Activated CD4-positive, alpha-beta T cell treated with anti-CD3 and anti-CD28 coated beads, Interleukin-2, amount 10 ng/mL, durations not matched to agents 24 days and 14 days (primary cell): ENCODE measurements at regions of chr2 and their contacts with region 1.

Region 1: DNA sequence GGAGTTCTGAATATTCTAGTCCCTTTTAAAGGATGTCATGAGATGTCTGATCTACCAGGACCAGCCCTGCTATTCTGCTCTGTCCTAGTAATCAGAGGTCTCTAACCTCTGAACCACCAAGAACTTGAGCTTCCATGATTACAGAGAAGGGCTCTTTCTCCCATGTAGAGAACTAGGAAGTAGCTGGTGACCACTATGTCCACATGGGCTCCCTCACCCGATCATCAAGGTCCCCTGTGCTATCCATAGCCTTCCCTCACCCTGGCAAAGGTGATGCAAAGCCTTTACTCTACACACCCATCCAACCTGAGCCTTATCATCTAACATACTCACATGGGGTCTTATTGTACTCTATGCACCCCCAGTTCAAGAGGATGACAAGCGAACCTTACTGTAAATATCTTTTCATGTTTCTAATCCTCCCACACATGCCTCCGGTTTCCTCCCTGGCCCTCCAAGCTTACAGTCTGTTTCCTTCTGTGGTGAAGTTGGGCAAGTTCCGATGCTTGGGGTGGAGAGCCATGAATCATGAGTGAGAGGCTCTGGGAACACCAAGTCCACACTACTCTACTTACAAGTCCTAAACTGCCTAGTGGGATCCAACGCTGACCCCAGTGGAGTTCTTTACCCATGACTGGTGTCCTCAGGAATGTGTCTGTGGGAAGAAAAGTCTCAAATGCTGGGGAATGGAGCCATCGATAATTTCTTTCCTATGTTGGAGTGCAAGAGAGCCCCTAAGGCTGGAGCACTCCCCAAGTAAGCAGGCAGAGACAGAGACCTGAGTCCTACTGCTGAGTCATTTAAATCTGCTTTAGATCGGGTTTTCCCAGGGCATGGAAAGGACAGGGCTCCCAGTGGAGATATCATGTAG is 73.3 kb upstream of the KLF7 start:
- DNase-seq: peak; percentile 73
- H3K4me3 Mint-ChIP-seq: peak overlapping the region; percentile 49
- H3K27ac Mint-ChIP-seq: peak overlapping the region; percentile 76
- H3K4me1 Mint-ChIP-seq: peaks cover 42% of the 10 kb centered on the region
- H3K27me3 Mint-ChIP-seq: no peaks in the 10 kb centered on the region

Region 2: GRCh38 chr2:207121784-207122183 is 117.3 kb before region 1 on chr2:
- intact Hi-C with region 1: loop called (anchors 1 kb)
- DNase-seq: no peak
- H3K4me3 Mint-ChIP-seq: no peak overlapping the region
- H3K27ac Mint-ChIP-seq: no peak overlapping the region
- H3K4me1 Mint-ChIP-seq: peaks cover 38% of the 10 kb centered on the region
- H3K27me3 Mint-ChIP-seq: no peaks in the 10 kb centered on the region

Region 3: DNA sequence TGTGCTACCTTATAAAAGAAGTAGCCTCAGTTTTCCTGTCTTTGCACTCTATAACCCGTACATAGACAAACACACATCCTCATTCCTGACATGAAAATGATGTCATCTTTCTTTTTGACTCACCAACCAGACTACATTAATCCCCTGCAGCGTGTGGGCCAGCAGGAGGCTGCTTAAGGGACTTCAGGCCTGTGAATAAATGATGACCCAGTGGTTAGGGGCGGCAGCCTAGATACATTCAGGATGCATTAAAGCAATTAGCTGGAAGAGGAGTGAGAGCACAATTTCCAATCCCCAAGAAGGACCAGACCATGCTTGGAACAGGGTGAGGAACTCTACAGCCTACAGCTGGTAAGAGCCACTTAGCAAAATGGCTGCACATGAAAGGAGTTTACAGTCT is 16.0 kb before region 1 on chr2:
- intact Hi-C with region 1: loop called (anchors 1 kb)
- DNase-seq: peak; percentile 59
- H3K4me3 Mint-ChIP-seq: no peak overlapping the region
- H3K27ac Mint-ChIP-seq: peak overlapping the region; percentile 59
- H3K4me1 Mint-ChIP-seq: peaks cover 35% of the 10 kb centered on the region
- H3K27me3 Mint-ChIP-seq: peaks cover 6% of the 10 kb centered on the region

Region 4: GRCh38 chr2:207258263-207258991 is 19.4 kb after region 1 on chr2:
- intact Hi-C with region 1: no loop called
- DNase-seq: no peak
- H3K4me3 Mint-ChIP-seq: no peak overlapping the region
- H3K27ac Mint-ChIP-seq: no peak overlapping the region
- H3K4me1 Mint-ChIP-seq: peaks cover 9% of the 10 kb centered on the region
- H3K27me3 Mint-ChIP-seq: peaks cover 5% of the 10 kb centered on the region

Region 5: GRCh38 chr2:207288628-207289027 is 49.6 kb after region 1 on chr2:
- intact Hi-C with region 1: loop called (anchors 1 kb)
- DNase-seq: no peak
- H3K4me3 Mint-ChIP-seq: no peak overlapping the region
- H3K27ac Mint-ChIP-seq: peak overlapping the region; percentile 20
- H3K4me1 Mint-ChIP-seq: peaks cover 39% of the 10 kb centered on the region
- H3K27me3 Mint-ChIP-seq: no peaks in the 10 kb centered on the region

Region 6: GRCh38 chr2:207317378-207317984 is 78.4 kb after region 1 on chr2:
- intact Hi-C with region 1: loop called (anchors 1 kb)
- DNase-seq: no peak
- H3K4me3 Mint-ChIP-seq: peak overlapping the region; percentile 4
- H3K27ac Mint-ChIP-seq: peak overlapping the region; percentile 57
- H3K4me1 Mint-ChIP-seq: peaks cover 31% of the 10 kb centered on the region
- H3K27me3 Mint-ChIP-seq: no peaks in the 10 kb centered on the region

Region 7: GRCh38 chr2:208101716-208102631 is 862.9 kb after region 1 on chr2:
- intact Hi-C with region 1: no loop called
- DNase-seq: no peak
- H3K4me3 Mint-ChIP-seq: no peak overlapping the region
- H3K27ac Mint-ChIP-seq: no peak overlapping the region
- H3K4me1 Mint-ChIP-seq: peaks cover 11% of the 10 kb centered on the region
- H3K27me3 Mint-ChIP-seq: peaks cover 2% of the 10 kb centered on the region